ENCODE measurements at regions of chr4 and their contacts with region 1.

Region 1: DNA sequence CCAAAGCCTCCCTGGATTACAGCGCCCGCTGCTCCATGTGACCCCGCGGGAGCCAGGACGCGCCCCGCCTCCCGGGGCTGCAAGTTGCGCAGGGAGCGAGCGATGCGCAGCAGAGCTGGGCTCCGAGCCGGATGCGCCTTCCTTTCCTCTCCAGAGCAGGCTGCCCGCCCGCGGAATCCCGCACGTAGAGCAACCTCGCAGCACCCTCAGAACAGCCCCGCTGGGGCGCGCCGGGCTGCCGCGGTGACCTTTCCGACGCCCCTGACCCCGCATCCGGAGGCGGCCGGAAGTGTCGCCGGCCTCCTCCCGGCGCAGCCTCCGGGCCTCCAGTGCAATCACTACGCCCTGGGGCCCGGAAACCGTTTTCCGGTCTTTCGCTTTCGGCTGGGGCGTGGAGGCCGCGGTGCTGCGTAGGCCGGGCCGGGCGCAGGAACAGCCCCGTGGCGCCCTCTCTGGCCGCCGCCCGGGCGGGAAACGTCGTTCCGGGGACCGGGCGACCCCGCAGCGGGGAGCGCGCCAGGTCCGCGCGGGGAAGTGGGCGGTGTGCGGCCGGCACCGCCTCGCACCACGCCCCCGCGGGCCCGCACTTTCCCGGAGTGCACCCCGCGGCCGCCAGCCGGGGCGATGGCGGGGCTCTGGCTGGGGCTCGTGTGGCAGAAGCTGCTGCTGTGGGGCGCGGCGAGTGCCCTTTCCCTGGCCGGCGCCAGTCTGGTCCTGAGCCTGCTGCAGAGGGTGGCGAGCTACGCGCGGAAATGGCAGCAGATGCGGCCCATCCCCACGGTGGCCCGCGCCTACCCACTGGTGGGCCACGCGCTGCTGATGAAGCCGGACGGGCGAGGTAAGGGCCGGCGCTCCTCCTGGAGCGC is at the start of gene CYP4V2:
- DNase-seq: peak in 1 of 2 experiments; percentile 78
- H3K4me3 ChIP-seq: peak within 1 kb of the TSS; percentile 70
- H3K27ac ChIP-seq: no peak within 1 kb of the TSS
- H3K4me1 ChIP-seq: peaks cover 8% of the 10 kb centered on the region
- H3K27me3 ChIP-seq: no peaks in the 10 kb centered on the region
- CTCF ChIP-seq: no peak
- total RNA-seq, gene CYP4V2: 12.5 and 13.0 TPM in 2 replicates

Region 2: DNA sequence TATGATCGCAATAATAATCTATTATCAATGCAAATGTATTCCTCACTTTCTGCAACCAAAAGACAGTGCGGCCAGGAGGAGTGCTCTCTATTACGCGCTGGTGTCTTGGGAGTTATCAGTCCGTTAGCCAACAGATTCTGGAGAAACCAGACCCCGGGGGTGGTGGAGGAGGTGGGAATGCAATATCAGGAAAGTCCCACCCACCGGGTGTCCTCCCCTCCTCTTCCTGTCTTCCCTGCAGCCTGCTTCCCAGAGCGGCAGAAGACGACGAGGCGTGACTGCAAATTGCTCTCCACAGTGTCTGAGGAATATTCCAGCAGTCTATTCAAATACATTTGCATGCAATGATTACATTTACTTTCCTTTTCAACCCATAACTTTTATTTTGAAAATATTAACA is 140.3 kb before region 1 on chr4:
- CTCF ChIA-PET with region 1: no interaction called
- POLR2A ChIA-PET with region 1: no interaction called
- intact Hi-C with region 1: no loop called
- DNase-seq: no peak
- H3K4me3 ChIP-seq: no peak overlapping the region
- H3K27ac ChIP-seq: no peak overlapping the region
- H3K4me1 ChIP-seq: no peaks in the 10 kb centered on the region
- H3K27me3 ChIP-seq: no peaks in the 10 kb centered on the region; the same call in 1 of the 2 replicates
- CTCF ChIP-seq: no peak

Region 3: GRCh38 chr4:186067757-186068385 is 123.6 kb before region 1 on chr4:
- CTCF ChIA-PET with region 1: no interaction called
- POLR2A ChIA-PET with region 1: no interaction called
- intact Hi-C with region 1: loop called (anchors 2 kb)
- DNase-seq: peak in 1 of 2 experiments; percentile 47
- H3K4me3 ChIP-seq: peak overlapping the region; percentile 60; the same call in 1 of the 2 replicates
- H3K27ac ChIP-seq: no peak overlapping the region
- H3K4me1 ChIP-seq: peaks cover 6% of the 10 kb centered on the region; the same call in 1 of the 2 replicates
- H3K27me3 ChIP-seq: no peaks in the 10 kb centered on the region
- CTCF ChIP-seq: no peak

Measured in PC-9 (cell line).